ENCODE measurements at regions of chr3 and their contacts with region 1.

Region 1: GRCh38 chr3:122074621-122075265 is 19.6 kb downstream of the CD86 start:
- DNase-seq: peak; percentile 79
- H3K4me3 Mint-ChIP-seq: peak overlapping the region; percentile 84
- H3K27ac Mint-ChIP-seq: peak overlapping the region; percentile 95
- H3K4me1 Mint-ChIP-seq: peaks cover 64% of the 10 kb centered on the region
- H3K27me3 Mint-ChIP-seq: no peaks in the 10 kb centered on the region

Region 2: DNA sequence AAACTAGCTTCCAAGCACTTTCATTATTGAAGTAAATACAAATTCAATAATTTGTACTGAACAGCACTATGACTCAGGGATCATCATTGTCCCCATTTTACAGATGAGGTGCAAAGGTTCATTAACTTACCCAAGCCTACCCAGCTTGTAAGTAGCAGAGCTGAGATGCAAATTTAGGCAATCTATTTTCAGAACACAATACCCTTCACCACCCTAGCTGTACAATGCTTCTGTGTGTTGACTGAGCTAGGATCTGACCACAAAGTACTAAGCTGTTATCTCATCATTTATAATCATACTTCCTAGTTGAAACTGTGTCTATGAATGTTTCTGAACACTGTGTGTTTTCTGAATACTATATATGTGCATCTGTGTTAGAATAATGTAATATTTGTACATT is 49.4 kb before region 1 on chr3:
- CTCF ChIA-PET with region 1: no interaction called
- POLR2A ChIA-PET with region 1: interaction called, 13 read pairs
- DNase-seq: no peak
- H3K4me3 Mint-ChIP-seq: no peak overlapping the region
- H3K27ac Mint-ChIP-seq: no peak overlapping the region
- H3K4me1 Mint-ChIP-seq: peaks cover 28% of the 10 kb centered on the region
- H3K27me3 Mint-ChIP-seq: peaks cover 14% of the 10 kb centered on the region

Region 3: GRCh38 chr3:122030381-122031122 is 44.2 kb before region 1 on chr3:
- CTCF ChIA-PET with region 1: no interaction called
- POLR2A ChIA-PET with region 1: interaction called, 13 read pairs
- DNase-seq: peak; percentile 51
- H3K4me3 Mint-ChIP-seq: peak overlapping the region; percentile 50
- H3K27ac Mint-ChIP-seq: peak overlapping the region; percentile 86
- H3K4me1 Mint-ChIP-seq: peaks cover 28% of the 10 kb centered on the region
- H3K27me3 Mint-ChIP-seq: no peaks in the 10 kb centered on the region

Measured in activated CD4-positive, alpha-beta memory T cell treated with anti-CD3 and anti-CD28 coated beads, Interleukin-2, amount 10 ng/mL, durations not matched to agents 7 days and 5 days (primary cell).